Endothelial cell of umbilical vein (primary cell): ENCODE measurements at regions of chr2 and their contacts with region 1.

Region 1: GRCh38 chr2:156947261-156947660 is 310.2 kb upstream of the GALNT5 start:
- DNase-seq: no peak
- H3K4me3 ChIP-seq: no peak overlapping the region
- H3K27ac ChIP-seq: no peak overlapping the region
- H3K4me1 ChIP-seq: no peaks in the 10 kb centered on the region
- H3K27me3 ChIP-seq: no peaks in the 10 kb centered on the region
- CTCF ChIP-seq: no peak
- POLR2A ChIP-seq: no peak

Region 2: GRCh38 chr2:156653655-156654054 is 293.6 kb before region 1 on chr2:
- CTCF ChIA-PET with region 1: no interaction called
- POLR2A ChIA-PET with region 1: no interaction called
- dilution Hi-C with region 1: no loop called
- intact Hi-C with region 1: loop called (anchors 5 kb)
- DNase-seq: no peak
- H3K4me3 ChIP-seq: no peak overlapping the region
- H3K27ac ChIP-seq: no peak overlapping the region
- H3K4me1 ChIP-seq: no peaks in the 10 kb centered on the region
- H3K27me3 ChIP-seq: no peaks in the 10 kb centered on the region
- CTCF ChIP-seq: no peak
- POLR2A ChIP-seq: no peak

Region 3: GRCh38 chr2:157076526-157077161 is 129.4 kb after region 1 on chr2:
- CTCF ChIA-PET with region 1: no interaction called
- POLR2A ChIA-PET with region 1: no interaction called
- dilution Hi-C with region 1: no loop called
- intact Hi-C with region 1: no loop called
- DNase-seq: no peak
- H3K4me3 ChIP-seq: no peak overlapping the region
- H3K27ac ChIP-seq: no peak overlapping the region
- H3K4me1 ChIP-seq: no peaks in the 10 kb centered on the region
- H3K27me3 ChIP-seq: peaks cover 0 to 1% of the 10 kb centered on the region in 2 experiments
- CTCF ChIP-seq: no peak
- POLR2A ChIP-seq: no peak

Region 4: DNA sequence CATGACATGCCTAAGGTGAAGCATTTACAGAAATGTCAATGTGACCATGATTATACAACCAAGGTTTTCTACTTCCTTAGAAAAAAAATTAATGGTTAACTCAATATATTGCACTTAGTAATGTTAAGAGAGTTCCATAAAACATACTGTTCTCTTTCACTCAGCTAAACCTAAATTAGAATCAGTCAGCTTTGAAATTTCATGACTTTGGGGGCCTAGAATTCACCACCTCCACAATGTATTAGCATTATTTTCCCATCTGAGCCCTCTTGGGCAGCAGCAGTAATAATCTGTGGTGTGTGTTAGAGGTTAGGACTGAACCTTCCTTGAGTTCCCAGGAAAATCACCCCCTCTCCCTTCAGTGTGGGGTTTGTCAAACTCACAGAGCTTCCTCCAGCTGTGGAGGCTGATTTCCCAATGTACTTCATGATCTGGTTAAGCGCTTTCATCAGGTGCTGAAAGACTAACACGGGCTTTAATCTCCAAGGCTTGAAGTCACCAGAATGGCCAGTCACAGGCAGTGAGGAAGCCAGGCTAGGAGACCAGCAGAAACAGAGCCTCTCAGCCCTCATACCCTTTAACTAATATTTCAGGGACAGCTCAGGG is 1147.3 kb after region 1 on chr2:
- CTCF ChIA-PET with region 1: no interaction called
- POLR2A ChIA-PET with region 1: no interaction called
- dilution Hi-C with region 1: no loop called
- intact Hi-C with region 1: no loop called
- DNase-seq: no peak
- H3K4me3 ChIP-seq: no peak overlapping the region
- H3K27ac ChIP-seq: no peak overlapping the region
- H3K4me1 ChIP-seq: no peaks in the 10 kb centered on the region
- H3K27me3 ChIP-seq: no peaks in the 10 kb centered on the region
- CTCF ChIP-seq: no peak
- POLR2A ChIP-seq: no peak